ENCODE measurements at regions of chrX and their contacts with region 1.

Region 1: GRCh38 chrX:54044126-54044876 is at the start of gene PHF8:
- DNase-seq: peak; percentile 95
- H3K4me3 Mint-ChIP-seq: peak within 1 kb of the TSS; percentile 89
- H3K27ac Mint-ChIP-seq: peak within 1 kb of the TSS; percentile 95
- H3K4me1 Mint-ChIP-seq: peaks cover 19% of the 10 kb centered on the region
- H3K27me3 Mint-ChIP-seq: no peaks in the 10 kb centered on the region
- total RNA-seq, gene PHF8: 51.7 to 53.2 TPM

Region 2: GRCh38 chrX:53081925-53082772 is 962.2 kb before region 1 on chrX and contains the start of gene TSPYL2:
- CTCF ChIA-PET with region 1: no interaction called
- intact Hi-C with region 1: loop called (anchors 1 kb)
- DNase-seq: peak; percentile 93
- H3K4me3 Mint-ChIP-seq: peak within 1 kb of the TSS; percentile 90
- H3K27ac Mint-ChIP-seq: peak within 1 kb of the TSS; percentile 94
- H3K4me1 Mint-ChIP-seq: peaks cover 48% of the 10 kb centered on the region
- H3K27me3 Mint-ChIP-seq: no peaks in the 10 kb centered on the region
- total RNA-seq, gene TSPYL2: 72.2 to 74.4 TPM

Region 3: GRCh38 chrX:53422086-53422860 is 622.0 kb before region 1 on chrX and contains the start of gene SMC1A:
- CTCF ChIA-PET with region 1: no interaction called
- intact Hi-C with region 1: loop called (anchors 1 kb)
- DNase-seq: peak; percentile 97
- H3K4me3 Mint-ChIP-seq: peak within 1 kb of the TSS; percentile 88
- H3K27ac Mint-ChIP-seq: peak within 1 kb of the TSS; percentile 97
- H3K4me1 Mint-ChIP-seq: peaks cover 30% of the 10 kb centered on the region
- H3K27me3 Mint-ChIP-seq: no peaks in the 10 kb centered on the region
- total RNA-seq, gene SMC1A: 169 to 170 TPM

Region 4: GRCh38 chrX:53714580-53715345 is 329.5 kb before region 1 on chrX:
- CTCF ChIA-PET with region 1: no interaction called
- intact Hi-C with region 1: loop called (anchors 1 kb)
- DNase-seq: peak; percentile 77
- H3K4me3 Mint-ChIP-seq: peak overlapping the region; percentile 85
- H3K27ac Mint-ChIP-seq: peak overlapping the region; percentile 94
- H3K4me1 Mint-ChIP-seq: peaks cover 34% of the 10 kb centered on the region
- H3K27me3 Mint-ChIP-seq: no peaks in the 10 kb centered on the region

Region 5: GRCh38 chrX:54357414-54358377 is 313.4 kb after region 1 on chrX and contains the start of gene WNK3:
- CTCF ChIA-PET with region 1: no interaction called
- intact Hi-C with region 1: loop called (anchors 1 kb)
- DNase-seq: peak; percentile 47
- H3K4me3 Mint-ChIP-seq: peak within 1 kb of the TSS; percentile 80
- H3K27ac Mint-ChIP-seq: no peak within 1 kb of the TSS
- H3K4me1 Mint-ChIP-seq: peaks cover 12% of the 10 kb centered on the region
- H3K27me3 Mint-ChIP-seq: peaks cover 10% of the 10 kb centered on the region
- total RNA-seq, gene WNK3: 0.25 to 0.60 TPM

Region 6: GRCh38 chrX:54529552-54530357 is 485.5 kb after region 1 on chrX and contains the start of gene GNL3L:
- CTCF ChIA-PET with region 1: no interaction called
- intact Hi-C with region 1: loop called (anchors 1 kb)
- DNase-seq: peak; percentile 84
- H3K4me3 Mint-ChIP-seq: peak within 1 kb of the TSS; percentile 90
- H3K27ac Mint-ChIP-seq: peak within 1 kb of the TSS; percentile 98
- H3K4me1 Mint-ChIP-seq: peaks cover 31% of the 10 kb centered on the region
- H3K27me3 Mint-ChIP-seq: no peaks in the 10 kb centered on the region
- total RNA-seq, gene GNL3L: 47.6 to 47.9 TPM

Region 7: DNA sequence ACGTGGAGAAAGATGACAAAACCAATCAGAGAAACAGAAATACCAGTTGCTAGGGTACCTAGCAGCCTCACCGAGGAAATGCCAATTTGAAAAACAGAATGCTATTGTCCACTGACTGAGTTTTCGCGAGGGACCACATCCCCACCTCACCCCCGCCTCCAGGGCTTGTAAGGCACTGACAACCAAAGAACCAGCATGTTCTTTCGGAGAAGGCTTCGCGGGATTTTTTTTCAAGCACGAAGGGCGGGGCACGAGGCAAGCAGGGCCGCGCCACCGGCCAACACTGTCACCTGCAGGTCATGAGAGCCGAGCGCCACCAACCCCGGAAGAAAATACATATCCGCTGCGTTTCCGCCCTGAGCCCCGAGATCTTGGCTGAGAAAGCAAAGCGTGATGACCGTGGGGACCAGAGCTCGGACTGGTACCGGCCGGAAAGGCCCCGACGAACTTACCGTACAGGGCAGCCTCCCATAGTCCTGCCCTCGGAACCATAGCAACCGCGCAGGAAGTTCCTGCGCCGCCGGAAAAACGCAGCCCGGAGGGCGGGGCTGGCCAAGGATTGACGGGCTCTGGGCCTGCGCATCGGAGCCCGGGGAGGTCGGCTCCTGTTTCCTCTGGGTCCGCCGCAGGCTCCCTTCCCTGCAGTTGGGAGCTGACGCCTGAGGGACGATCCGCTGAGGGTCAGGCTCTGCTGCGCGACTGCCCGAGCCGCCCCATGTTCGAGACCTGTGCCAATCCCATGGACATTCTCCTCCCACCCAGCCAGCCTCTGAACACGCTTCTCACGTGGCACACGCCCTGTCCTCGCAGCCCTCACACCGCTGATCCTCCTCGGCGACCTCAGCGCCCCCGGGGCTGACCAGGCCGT is 1116.6 kb after region 1 on chrX:
- CTCF ChIA-PET with region 1: no interaction called
- intact Hi-C with region 1: loop called (anchors 1 kb)
- DNase-seq: peak; percentile 92
- H3K4me3 Mint-ChIP-seq: peak overlapping the region; percentile 89
- H3K27ac Mint-ChIP-seq: peak overlapping the region; percentile 93
- H3K4me1 Mint-ChIP-seq: no peaks in the 10 kb centered on the region
- H3K27me3 Mint-ChIP-seq: no peaks in the 10 kb centered on the region

Measured in activated naive CD4-positive, alpha-beta T cell treated with anti-CD3 and anti-CD28 coated beads for 36 hours (primary cell).